Brain microvascular endothelial cell (primary cell): ENCODE measurements at regions of chr4 and their contacts with region 1.

Region 1: DNA sequence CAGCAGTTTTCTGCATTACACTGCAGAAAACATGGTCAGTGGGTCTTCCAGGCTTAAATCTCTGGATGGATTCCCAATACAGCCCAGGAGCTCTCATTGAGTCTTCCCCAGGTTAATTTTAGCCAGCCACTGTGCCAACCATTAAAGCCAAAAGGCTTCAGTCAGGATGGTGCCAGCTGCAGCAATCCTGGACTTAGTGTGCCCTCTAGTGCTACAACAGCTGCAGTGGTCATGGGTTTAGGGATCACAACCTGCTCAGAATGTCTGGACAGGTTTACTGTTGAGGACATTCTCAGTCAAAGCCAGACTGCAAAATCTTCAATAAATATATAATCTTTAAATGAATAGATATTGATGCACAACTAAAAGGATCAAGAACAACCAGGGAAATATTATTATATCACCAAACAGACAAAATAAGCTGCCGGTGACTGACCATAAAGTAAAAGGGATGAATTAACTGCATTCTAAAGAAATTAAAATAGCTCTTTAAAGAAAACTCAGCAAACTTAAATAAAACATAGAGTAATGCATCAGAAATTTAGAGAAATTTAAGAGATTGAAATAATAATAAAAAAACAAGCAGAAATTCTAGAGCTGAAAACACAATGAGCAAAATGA is 639.9 kb downstream of the SPOCK3 start:
- DNase-seq: peak; percentile 49
- H3K4me3 ChIP-seq: no peak overlapping the region
- H3K27ac ChIP-seq: no peak overlapping the region
- H3K27me3 ChIP-seq: no peaks in the 10 kb centered on the region
- CTCF ChIP-seq: peak; percentile 93

Region 2: DNA sequence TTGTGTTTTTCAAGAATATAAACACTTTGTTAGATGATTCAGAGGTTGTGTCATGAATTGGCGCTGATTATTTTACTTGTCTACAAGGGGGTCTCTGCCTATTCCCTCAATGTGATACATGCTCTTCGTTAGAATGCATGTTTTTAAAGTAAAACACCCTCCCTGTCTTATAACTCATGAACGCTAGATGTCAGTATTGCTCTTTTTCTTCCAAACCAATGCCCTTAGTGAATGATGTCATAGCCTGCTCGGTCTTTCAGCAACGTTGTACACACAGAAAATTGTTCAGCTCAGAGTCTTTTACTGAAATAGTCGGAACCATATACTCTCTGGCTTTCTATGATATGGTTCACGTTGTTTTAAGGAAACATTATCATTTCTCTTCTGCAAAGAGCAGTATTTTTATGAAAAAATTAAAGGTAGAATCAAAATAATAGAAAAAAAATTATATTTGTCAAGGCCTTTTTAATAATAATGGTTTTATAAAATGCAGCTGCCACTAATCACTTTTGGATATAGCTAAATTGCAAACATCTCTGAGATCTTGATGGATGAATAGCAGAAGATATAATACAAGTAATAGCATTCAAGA is 428.5 kb before region 1 on chr4:
- in situ Hi-C with region 1: loop called (anchors 25 kb)
- DNase-seq: peak; percentile 51
- H3K4me3 ChIP-seq: no peak overlapping the region
- H3K27ac ChIP-seq: no peak overlapping the region
- H3K27me3 ChIP-seq: no peaks in the 10 kb centered on the region
- CTCF ChIP-seq: peak; percentile 59

Region 3: GRCh38 chr4:166657261-166657660 is 62.8 kb after region 1 on chr4:
- in situ Hi-C with region 1: no loop called
- DNase-seq: peak; percentile 53
- H3K4me3 ChIP-seq: no peak overlapping the region
- H3K27ac ChIP-seq: peak overlapping the region; percentile 20
- H3K27me3 ChIP-seq: no peaks in the 10 kb centered on the region
- CTCF ChIP-seq: no peak